MCF 10A (cell line): ENCODE measurements at regions of chr2 and their contacts with region 1.

Region 1: GRCh38 chr2:222797261-222797660 is 63.6 kb upstream of the ACSL3 start:
- DNase-seq: peak; percentile 53
- H3K4me3 Mint-ChIP-seq: no peak overlapping the region
- H3K27ac Mint-ChIP-seq: no peak overlapping the region
- H3K4me1 Mint-ChIP-seq: peaks cover 18% of the 10 kb centered on the region
- H3K27me3 Mint-ChIP-seq: no peaks in the 10 kb centered on the region
- CTCF ChIP-seq: peak; percentile 46

Region 2: DNA sequence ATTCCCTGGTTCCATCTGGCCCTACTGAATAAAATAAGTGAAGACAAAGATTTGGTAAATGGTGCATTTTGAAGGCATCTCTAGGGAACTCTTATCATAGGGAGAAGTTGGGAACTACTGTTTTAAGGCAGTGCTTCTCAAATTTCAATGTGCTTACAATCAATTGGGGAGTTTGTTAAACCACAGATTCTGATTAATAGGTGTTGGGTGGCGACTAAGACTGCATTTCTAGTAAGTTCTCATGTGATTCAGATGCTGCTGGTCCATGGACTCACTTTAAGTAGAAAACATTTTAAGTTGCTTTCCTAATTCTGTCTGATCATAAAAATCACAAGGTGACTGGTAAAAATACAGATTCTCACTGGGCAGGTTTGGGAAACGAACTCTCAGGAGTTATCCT is 155.9 kb before region 1 on chr2:
- CTCF ChIA-PET with region 1: no interaction called
- POLR2A ChIA-PET with region 1: no interaction called
- intact Hi-C with region 1: no loop called
- DNase-seq: no peak
- H3K4me3 Mint-ChIP-seq: no peak overlapping the region
- H3K27ac Mint-ChIP-seq: no peak overlapping the region
- H3K4me1 Mint-ChIP-seq: peaks cover 12% of the 10 kb centered on the region
- H3K27me3 Mint-ChIP-seq: no peaks in the 10 kb centered on the region
- CTCF ChIP-seq: no peak

Region 3: DNA sequence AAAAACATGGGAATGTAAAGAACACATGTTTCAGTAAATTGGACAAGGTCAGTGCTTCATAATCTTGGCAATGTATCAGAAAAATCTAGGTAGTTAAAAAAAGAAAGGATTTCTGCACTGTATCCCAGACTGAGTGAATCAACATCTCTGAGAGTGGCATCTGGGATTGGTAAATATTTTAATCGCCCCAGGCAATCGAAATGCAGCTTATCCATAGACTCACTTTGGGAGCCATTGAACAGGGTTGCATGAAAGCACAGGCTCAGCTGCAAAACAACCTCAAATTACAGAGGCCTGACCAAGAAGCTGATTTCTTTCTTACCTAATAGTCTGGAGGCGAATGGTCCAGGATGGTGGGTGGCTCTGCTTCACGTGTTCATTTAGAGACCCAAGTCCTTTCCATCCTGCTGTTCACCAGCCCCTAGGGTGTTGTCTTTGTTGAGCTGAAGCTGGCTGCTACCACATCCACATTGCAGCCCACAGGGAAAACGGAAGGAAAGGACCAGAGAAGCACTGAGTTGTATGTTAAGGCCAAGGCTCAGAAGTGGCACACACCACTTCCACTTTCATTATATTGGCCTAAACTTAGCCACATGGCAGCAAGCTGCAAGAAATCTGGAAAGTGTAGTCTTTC is 66.8 kb before region 1 on chr2:
- CTCF ChIA-PET with region 1: no interaction called
- POLR2A ChIA-PET with region 1: no interaction called
- intact Hi-C with region 1: no loop called
- DNase-seq: peak; percentile 30
- H3K4me3 Mint-ChIP-seq: no peak overlapping the region
- H3K27ac Mint-ChIP-seq: no peak overlapping the region
- H3K4me1 Mint-ChIP-seq: peaks cover 11% of the 10 kb centered on the region
- H3K27me3 Mint-ChIP-seq: no peaks in the 10 kb centered on the region
- CTCF ChIP-seq: no peak

Region 4: GRCh38 chr2:222771832-222772231 is 25.4 kb before region 1 on chr2:
- CTCF ChIA-PET with region 1: no interaction called
- POLR2A ChIA-PET with region 1: no interaction called
- intact Hi-C with region 1: no loop called
- DNase-seq: no peak
- H3K4me3 Mint-ChIP-seq: no peak overlapping the region
- H3K27ac Mint-ChIP-seq: no peak overlapping the region
- H3K4me1 Mint-ChIP-seq: peaks cover 5% of the 10 kb centered on the region
- H3K27me3 Mint-ChIP-seq: no peaks in the 10 kb centered on the region
- CTCF ChIP-seq: no peak

Region 5: DNA sequence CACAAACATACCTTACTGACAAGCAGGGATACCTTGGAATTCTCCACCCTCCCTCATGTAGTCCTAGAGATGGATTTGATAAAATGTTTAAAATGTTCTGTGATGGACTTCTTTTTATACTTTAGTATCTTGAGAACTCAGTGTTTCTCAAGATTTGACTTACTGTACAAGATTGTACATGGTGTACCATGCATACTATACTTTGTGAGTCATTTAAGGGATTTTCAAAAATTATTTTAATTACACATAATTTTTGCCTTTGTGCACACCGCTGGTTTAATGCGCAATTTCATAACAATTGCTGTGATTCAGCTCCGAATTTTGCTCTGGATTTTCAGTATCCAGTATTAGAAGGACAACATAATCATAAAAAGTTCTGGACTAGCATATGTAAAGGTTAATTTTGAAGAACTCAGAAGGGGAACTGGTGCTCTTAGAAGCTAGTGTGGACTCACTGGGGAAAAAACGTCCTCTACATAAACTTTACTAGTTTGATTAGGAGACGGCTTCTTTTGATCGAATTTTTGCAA is 15.0 kb before region 1 on chr2:
- CTCF ChIA-PET with region 1: interaction called, 18 read pairs
- POLR2A ChIA-PET with region 1: no interaction called
- intact Hi-C with region 1: no loop called
- DNase-seq: no peak
- H3K4me3 Mint-ChIP-seq: no peak overlapping the region
- H3K27ac Mint-ChIP-seq: no peak overlapping the region
- H3K4me1 Mint-ChIP-seq: peaks cover 17% of the 10 kb centered on the region
- H3K27me3 Mint-ChIP-seq: no peaks in the 10 kb centered on the region
- CTCF ChIP-seq: no peak

Region 6: DNA sequence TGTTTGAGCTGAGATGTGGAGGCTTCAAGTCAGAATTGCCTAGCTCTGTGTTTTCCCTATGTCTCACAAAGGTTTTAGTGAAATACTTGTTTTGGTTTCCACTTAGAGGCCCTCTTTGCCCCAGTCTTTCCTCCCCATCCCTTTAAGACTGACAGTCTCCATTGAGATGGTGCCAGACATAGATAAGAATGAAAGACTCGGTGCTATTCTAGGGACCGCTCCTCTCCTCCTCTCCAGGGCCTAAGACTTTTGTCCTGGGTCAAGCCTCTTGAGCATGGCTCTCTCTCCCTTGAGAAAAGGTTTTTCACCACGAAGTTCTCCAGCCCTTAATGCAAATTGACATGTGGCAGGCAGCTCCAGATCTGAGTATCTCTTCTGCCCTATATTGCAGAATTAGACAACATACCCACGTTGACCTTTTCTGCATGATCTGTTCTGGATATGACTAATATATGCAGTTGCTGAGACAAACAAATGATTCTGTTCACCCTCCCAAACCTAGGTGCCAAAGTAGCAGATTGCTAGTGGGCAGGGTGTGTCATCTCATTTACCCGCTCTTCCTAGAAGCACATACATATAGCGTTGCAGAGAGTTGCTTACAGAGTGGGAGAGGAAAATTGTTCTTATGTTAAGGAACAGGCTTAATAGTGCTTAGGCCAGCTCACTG is 16.0 kb after region 1 on chr2:
- CTCF ChIA-PET with region 1: interaction called, 4 read pairs
- POLR2A ChIA-PET with region 1: interaction called, 11 read pairs
- intact Hi-C with region 1: no loop called
- DNase-seq: peak; percentile 71
- H3K4me3 Mint-ChIP-seq: no peak overlapping the region
- H3K27ac Mint-ChIP-seq: peak overlapping the region; percentile 70
- H3K4me1 Mint-ChIP-seq: peaks cover 31% of the 10 kb centered on the region
- H3K27me3 Mint-ChIP-seq: no peaks in the 10 kb centered on the region
- CTCF ChIP-seq: no peak